Posterior cingulate gyrus (tissue), 11 donors: ENCODE measurements at regions of chr6 and their contacts with region 1.

Region 1: GRCh38 chr6:157021344-157021992 is 244.3 kb downstream of the ARID1B start:
- DNase-seq: peak; percentile 84 to 98 (median 88)

Region 2: GRCh38 chr6:156564127-156564806 is 457.2 kb before region 1 on chr6:
- intact Hi-C with region 1: loop called (anchors 10 kb)
- DNase-seq: peak; percentile 67 to 97 (median 84)

Region 3: DNA sequence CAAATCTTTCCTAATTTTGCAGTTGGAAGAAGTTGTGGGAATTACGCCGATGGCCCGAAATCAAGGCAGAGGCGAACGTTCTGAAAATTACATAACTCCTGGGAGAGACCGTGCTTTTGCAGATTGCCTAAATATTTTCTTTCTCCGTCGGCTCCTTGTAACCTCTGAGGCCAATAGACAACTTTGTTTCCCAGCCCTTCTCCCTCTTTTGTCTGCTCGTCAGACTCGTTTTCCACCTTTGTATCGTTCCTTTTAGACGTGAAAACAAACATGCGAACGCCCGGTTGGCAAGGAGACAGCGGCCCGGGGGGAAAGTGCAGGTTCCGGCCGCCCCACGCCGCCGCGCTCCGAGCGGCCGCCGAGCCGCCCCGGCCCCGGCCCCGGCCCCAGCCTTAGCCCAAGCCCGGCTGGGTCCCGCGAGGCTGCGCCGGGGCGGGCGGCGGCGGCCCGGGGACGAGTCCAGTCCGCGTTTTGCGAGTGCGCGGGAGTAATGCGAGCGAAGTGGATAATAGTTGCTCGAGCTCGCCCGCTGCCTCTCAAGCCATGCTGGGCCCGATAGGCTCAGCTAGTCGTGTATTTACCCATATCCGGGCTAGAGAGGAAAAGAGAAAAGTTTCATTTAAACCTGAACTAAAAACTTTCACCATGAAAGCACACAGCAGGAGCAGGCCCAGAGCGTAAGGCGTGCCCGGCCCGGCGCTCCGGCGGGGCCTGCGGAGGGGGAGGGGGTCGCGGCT is 244.5 kb before region 1 on chr6 and contains the start of gene ARID1B:
- intact Hi-C with region 1: loop called (anchors 2 kb)
- DNase-seq: peak; percentile 69 to 96 (median 79)

Region 4: DNA sequence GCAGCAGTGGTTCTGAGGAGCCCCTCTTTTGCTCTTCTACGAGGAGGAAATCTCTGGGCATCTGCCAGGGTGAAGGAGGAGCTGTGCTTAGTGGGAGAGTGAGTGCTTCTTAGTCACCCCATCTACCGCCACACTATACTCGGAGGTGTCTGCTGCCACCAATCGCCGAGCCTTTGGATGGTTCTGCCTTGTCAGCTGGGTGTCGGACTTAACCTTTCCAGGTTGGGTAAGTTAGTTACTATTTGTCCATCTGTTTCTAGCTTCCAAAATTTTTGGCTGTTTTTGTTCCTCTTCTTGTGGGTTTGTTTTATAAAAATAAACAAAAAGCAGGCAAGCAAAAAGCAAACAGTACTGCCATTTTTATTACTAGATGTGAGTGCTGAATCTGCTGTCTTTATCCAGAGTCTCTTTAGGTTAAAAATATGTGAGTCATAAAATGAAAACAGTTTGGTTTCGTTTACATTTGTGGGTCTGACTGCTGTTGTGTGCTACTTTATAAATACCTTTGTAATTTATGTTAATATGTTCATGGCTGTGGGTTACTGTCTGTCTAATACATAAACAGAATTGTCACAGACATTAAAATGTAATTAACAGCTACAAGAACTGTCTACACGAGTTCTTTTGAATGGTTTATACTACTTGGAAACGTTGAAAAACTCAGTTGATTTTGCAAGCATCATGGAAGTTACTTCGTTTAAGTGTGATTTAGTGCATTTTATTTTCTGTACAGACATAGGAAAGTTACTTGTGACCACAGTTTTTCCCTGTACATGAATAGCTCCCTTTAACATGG is 155.1 kb before region 1 on chr6:
- intact Hi-C with region 1: no loop called
- DNase-seq: peak in 7 of 10 donors; percentile 36 to 85 (median 60)

Region 5: GRCh38 chr6:157184202-157185020 is 162.9 kb after region 1 on chr6:
- intact Hi-C with region 1: loop called (anchors 5 kb)
- DNase-seq: peak; percentile 54 to 96 (median 76)